ENCODE measurements at regions of chr4 and their contacts with region 1.

Region 1: GRCh38 chr4:83074086-83074704 is 39.2 kb downstream of the COPS4 start:
- DNase-seq: no peak
- ATAC-seq: peak; percentile 85

Region 2: GRCh38 chr4:82402201-82402775 is 671.9 kb before region 1 on chr4:
- intact Hi-C with region 1: no loop called
- DNase-seq: no peak
- ATAC-seq: no peak

Region 3: DNA sequence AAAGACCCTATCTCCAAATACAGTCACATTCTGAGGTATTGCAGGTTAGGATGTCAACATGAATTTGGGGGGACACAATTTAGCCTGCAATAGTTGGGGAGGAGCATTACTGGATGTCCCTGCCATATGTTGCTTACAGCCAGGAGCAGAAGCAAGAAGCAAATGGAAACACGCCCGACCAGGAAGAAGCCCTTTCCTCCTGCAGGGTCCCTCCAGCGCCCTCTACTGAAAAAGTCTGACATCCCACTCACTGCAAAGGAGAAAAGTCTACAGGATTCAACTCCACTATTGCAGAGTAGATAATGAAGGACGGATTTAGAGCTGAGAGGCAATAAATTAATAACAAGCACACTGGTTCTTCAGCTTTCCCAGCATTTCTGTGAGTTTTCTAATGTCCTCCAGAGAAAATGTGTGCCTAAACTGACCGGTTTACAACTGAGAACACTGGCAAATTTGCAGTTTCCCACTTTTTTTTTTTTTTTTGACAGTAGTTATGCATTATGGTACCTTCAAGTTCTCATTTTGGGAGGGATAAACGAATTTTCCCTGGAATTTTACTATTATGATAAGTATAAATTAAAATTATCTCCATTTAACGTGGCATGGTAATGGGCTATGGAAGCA is 178.7 kb after region 1 on chr4:
- intact Hi-C with region 1: loop called in 1 of 2 experiments (anchors 5 kb)
- DNase-seq: peak; percentile 85 to 89
- ATAC-seq: peak; percentile 48